ENCODE measurements at regions of chr16 and their contacts with region 1.

Region 1: GRCh38 chr16:28950648-28951409 is at the start of gene NFATC2IP:
- DNase-seq: peak; percentile 99
- ATAC-seq: peak; percentile 98
- H3K4me3 Mint-ChIP-seq: peak within 1 kb of the TSS; percentile 94
- H3K27ac Mint-ChIP-seq: peak within 1 kb of the TSS; percentile 96
- H3K4me1 Mint-ChIP-seq: peaks cover 12% of the 10 kb centered on the region
- H3K27me3 Mint-ChIP-seq: peaks cover 2% of the 10 kb centered on the region; the same call in 1 of the 2 replicates
- CTCF ChIP-seq: no peak
- total RNA-seq, gene NFATC2IP: 60.7 to 66.6 TPM (median 64.0 TPM) in 3 replicates

Region 2: DNA sequence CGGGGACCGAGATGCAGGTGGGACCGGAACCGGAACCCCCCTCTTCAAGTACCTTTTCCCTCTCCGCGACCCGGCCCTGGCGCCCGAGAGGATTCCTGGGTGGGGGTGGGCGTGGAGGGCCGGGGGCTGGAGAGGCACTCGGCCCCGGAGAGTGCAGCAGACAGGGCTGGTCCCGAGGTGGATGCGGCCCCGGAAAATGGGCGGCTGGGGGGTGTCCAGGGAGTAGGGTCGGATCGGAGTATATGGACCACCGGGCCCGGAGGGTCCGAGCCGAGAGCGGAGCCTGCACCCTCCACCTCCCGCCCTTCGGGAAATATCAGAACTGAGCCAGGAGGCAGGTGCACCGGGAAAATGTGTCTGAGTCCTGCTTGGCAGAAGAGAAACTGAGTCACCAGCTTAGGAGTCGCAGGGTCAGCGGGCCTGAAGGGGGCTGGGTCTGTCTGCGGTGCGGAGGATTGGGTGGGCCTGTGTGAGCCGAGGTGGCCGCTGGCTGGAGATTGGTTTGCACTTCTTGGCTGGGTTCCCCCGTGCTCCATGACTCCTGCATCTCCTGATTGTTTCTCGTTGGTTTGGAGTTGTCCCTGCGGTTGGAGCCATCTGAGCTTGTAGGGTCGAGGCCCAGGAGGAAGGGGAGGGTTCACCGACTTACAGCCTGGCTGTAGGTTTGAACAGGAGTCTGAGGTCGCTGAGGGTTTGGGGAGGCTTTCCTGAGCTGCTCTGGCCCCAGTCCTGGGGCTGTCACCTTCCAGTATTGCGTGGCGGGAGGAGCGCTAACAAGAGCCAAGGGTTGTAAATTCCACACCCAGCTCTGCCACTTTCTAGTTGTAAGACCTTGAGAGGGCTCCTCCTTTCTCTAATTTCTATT is 86.7 kb before region 1 on chr16:
- CTCF ChIA-PET with region 1: interaction called, 16 read pairs
- POLR2A ChIA-PET with region 1: interaction called, 4 read pairs
- DNase-seq: no peak
- ATAC-seq: peak; percentile 10
- H3K4me3 Mint-ChIP-seq: peak overlapping the region; percentile 91
- H3K27ac Mint-ChIP-seq: peak overlapping the region; percentile 76
- H3K4me1 Mint-ChIP-seq: peaks cover 17% of the 10 kb centered on the region
- H3K27me3 Mint-ChIP-seq: no peaks in the 10 kb centered on the region
- CTCF ChIP-seq: no peak

Region 3: DNA sequence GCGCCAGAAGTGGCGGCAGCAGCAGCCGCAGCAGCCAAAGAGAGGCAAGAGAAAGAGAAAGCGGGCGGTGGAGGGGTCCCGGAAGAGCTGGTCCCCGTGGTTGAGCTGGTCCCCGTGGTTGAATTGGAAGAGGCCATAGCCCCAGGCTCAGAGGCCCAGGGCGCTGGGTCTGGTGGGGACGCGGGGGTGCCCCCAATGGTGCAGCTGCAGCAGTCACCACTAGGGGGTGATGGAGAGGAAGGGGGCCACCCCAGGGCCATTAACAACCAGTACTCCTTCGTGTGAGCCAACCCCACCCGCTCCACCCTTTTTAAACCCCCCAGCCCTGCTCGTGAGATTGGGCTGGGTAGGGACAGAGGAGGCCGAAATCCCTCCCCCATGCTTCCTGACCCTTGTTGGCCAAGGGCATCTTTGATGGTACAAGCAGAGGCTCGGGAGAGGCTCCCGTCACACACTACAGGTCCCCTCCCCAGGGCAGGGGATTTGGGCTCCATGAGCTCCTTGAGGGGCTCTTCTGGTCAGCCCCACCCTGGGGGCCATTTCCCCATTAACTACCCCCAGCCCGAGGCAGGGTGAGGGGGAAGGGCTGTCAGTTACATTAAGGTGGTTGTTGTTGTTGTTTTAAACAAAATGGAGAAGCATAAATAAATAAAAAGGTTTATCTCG is 77.2 kb before region 1 on chr16:
- CTCF ChIA-PET with region 1: interaction called, 10 read pairs
- POLR2A ChIA-PET with region 1: no interaction called
- DNase-seq: peak; percentile 77
- ATAC-seq: peak; percentile 79
- H3K4me3 Mint-ChIP-seq: no peak overlapping the region
- H3K27ac Mint-ChIP-seq: no peak overlapping the region
- H3K4me1 Mint-ChIP-seq: peaks cover 10% of the 10 kb centered on the region
- H3K27me3 Mint-ChIP-seq: no peaks in the 10 kb centered on the region
- CTCF ChIP-seq: peak; percentile 90

Region 4: GRCh38 chr16:28905800-28906372 is 44.9 kb before region 1 on chr16:
- CTCF ChIA-PET with region 1: interaction called, 14 read pairs
- POLR2A ChIA-PET with region 1: no interaction called
- DNase-seq: no peak
- ATAC-seq: no peak; the same call in 1 of the 2 replicates
- H3K4me3 Mint-ChIP-seq: no peak overlapping the region
- H3K27ac Mint-ChIP-seq: no peak overlapping the region
- H3K4me1 Mint-ChIP-seq: no peaks in the 10 kb centered on the region
- H3K27me3 Mint-ChIP-seq: no peaks in the 10 kb centered on the region
- CTCF ChIP-seq: no peak

Region 5: DNA sequence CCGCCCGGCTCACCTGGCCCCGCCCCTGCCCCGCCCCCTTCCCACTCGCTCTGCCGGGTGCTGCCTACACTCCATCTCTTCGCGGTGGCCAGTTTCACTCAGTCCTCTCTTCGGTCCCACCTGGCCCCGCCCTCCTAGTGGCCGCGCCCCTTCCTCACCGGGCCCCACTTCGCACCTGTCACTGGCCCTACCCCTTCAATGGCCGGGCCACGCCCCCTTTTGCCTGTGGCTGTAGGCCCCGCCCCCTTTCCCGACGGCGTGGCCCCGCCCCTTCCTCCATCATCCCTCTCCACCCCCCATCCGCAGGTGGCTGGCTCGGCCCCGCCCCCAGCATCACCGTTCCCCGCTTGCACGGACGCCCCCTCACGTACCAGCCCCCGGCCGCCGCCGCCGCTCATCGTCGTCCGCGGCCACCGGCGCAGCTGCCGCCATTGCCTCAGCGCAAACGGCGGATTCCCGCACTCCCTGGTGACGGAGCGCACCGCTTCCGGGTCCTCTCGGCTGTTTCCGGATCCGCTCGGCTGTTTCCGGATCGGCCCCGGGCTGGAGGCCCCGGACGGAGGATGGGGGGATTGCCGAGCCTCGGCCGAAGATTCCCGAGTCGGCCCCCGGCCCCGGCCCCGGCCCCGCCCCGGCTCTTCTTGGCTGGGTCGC is 26.0 kb before region 1 on chr16 and contains the start of gene RABEP2:
- CTCF ChIA-PET with region 1: interaction called, 16 read pairs
- POLR2A ChIA-PET with region 1: no interaction called
- DNase-seq: peak; percentile 99
- ATAC-seq: peak; percentile 91
- H3K4me3 Mint-ChIP-seq: peak within 1 kb of the TSS; percentile 97
- H3K27ac Mint-ChIP-seq: peak within 1 kb of the TSS; percentile 99
- H3K4me1 Mint-ChIP-seq: peaks cover 14% of the 10 kb centered on the region
- H3K27me3 Mint-ChIP-seq: peaks cover 3% of the 10 kb centered on the region; the same call in 1 of the 2 replicates
- CTCF ChIP-seq: no peak
- total RNA-seq, gene RABEP2: 16.5 to 24.0 TPM (median 22.6 TPM) in 3 replicates

Region 6: DNA sequence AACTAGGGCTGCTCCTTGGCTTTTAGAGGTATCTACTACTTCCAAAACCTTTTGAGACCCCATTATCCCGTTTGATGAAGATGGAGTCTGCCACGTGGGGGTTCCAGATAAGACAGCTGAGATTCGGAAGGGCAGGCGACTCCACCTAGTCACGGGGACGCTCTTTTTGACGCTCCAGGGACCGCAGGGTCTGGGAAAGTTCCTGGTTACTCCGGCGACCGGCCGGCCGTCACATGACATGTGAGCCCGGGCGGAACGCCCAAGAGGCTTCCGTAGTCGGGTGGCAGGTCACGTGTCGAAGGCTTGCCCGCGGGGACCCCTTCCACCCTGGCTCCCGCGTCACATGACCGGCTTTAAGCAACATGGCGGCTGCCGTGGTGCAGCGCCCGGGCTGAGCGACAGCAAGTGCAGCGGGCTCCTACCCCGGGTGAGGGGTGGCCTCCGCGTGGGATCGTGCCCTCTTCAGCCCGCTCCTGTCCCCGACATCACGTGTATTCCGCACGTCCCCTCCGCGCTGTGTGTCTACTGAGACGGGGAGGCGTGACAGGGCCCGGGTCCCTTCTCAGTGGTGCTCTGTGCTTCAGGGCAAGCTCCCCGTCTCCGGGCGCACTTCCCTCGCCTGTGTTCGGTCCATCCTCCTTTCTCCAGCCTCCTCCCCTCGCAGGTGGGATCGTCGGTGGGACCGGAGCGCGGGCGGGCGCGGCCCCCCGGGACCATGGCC is 23.8 kb after region 1 on chr16 and contains the start of gene SPNS1:
- CTCF ChIA-PET with region 1: interaction called, 12 read pairs
- POLR2A ChIA-PET with region 1: interaction called, 3 read pairs
- DNase-seq: peak; percentile 97
- ATAC-seq: peak; percentile 83
- H3K4me3 Mint-ChIP-seq: peak within 1 kb of the TSS; percentile 95
- H3K27ac Mint-ChIP-seq: peak within 1 kb of the TSS; percentile 98
- H3K4me1 Mint-ChIP-seq: peaks cover 7% of the 10 kb centered on the region
- H3K27me3 Mint-ChIP-seq: no peaks in the 10 kb centered on the region
- CTCF ChIP-seq: no peak
- total RNA-seq, gene SPNS1: 52.4 to 64.4 TPM (median 54.0 TPM) in 3 replicates

Region 7: DNA sequence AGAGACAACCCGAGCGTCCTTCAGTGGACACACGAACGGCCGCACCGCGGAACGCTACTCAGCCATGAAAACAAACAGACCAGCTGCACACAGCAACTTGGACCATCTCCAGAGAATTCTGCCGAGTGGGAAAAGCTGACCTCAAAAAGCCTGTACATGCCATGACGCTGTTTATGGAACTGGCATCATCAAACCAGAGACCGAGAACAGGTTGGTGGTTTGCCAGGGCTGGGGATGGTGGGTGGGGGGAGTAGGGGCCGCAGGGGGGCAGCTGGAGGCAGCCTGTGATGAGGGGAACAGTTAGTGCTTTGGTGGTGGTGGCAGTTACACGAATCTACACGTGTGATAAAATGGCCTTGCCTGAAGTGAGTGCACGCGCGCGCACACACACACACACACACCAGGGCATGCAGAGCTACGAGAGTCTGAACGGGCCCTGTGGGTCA is 203.9 kb after region 1 on chr16:
- CTCF ChIA-PET with region 1: no interaction called
- POLR2A ChIA-PET with region 1: no interaction called
- DNase-seq: no peak
- ATAC-seq: no peak
- H3K4me3 Mint-ChIP-seq: no peak overlapping the region
- H3K27ac Mint-ChIP-seq: no peak overlapping the region
- H3K4me1 Mint-ChIP-seq: peaks cover 28% of the 10 kb centered on the region
- H3K27me3 Mint-ChIP-seq: no peaks in the 10 kb centered on the region
- CTCF ChIP-seq: no peak